Ovary (tissue), 10 donors: ENCODE measurements at regions of chr9 and their contacts with region 1.

Region 1: GRCh38 chr9:128504485-128505413 is at the start of gene GLE1:
- DNase-seq: peak; percentile 94 to 98 (median 97)
- H3K4me3 ChIP-seq: peak within 1 kb of the TSS; percentile 95
- H3K27ac ChIP-seq: peak within 1 kb of the TSS in 1 of 2 donors; percentile 65
- H3K4me1 ChIP-seq: peaks cover 7% of the 10 kb centered on the region
- H3K27me3 ChIP-seq: no peaks in the 10 kb centered on the region
- CTCF ChIP-seq: no peak
- EP300 ChIP-seq: no peak
- POLR2A ChIP-seq: peak; percentile 72
- total RNA-seq, gene GLE1: 12.4 to 20.2 (median 19.0) TPM

Region 2: DNA sequence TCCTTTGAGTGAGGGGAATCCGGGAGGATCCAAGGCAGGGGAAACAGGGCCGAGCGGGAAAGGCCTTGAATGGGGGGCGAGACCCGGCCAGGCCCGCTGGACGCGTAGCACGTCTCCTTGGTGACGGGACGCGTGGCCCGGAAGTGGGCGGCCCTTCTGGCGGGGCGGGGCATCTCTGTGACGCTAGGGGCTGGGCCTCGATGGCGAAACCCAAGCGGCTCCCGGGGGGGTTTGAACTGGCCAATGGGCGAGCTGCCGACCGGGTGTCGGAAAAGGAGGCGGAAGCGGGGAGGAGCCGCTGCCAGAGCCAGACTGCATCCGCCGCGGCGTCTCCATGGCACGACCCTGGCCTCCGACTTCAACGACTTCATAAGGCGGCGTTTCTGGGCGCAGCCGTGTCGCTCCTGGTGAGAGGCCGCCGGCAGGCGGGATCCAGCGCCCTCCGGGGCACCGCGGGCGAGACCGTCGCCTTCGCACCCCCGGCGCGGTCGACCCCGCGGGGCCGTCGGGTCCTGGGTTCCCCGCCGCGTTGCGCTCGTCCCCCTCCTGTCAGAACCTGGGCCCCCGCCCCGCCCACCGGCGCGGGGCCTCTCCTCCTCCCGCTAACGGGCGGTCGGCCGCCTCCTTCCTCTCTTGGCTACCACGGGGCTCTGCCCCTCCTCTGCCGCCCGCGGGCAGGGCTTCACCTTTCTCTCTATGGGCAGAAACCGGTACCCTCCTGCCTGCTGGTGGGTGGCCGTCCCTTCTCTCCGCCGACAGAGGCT is 48.7 kb before region 1 on chr9 and contains the start of gene ODF2:
- intact Hi-C with region 1: loop called in 1 of 4 experiments (anchors 5 kb)
- DNase-seq: peak; percentile 98 to 99 (median 99)
- H3K4me3 ChIP-seq: peak within 1 kb of the TSS; percentile 56
- H3K27ac ChIP-seq: peak within 1 kb of the TSS in 1 of 2 donors; percentile 73
- H3K4me1 ChIP-seq: peaks cover 2% of the 10 kb centered on the region
- H3K27me3 ChIP-seq: no peaks in the 10 kb centered on the region
- CTCF ChIP-seq: no peak
- EP300 ChIP-seq: no peak
- POLR2A ChIP-seq: peak; percentile 50
- total RNA-seq, gene ODF2: 9.7 to 26.5 (median 20.3) TPM

Region 3: DNA sequence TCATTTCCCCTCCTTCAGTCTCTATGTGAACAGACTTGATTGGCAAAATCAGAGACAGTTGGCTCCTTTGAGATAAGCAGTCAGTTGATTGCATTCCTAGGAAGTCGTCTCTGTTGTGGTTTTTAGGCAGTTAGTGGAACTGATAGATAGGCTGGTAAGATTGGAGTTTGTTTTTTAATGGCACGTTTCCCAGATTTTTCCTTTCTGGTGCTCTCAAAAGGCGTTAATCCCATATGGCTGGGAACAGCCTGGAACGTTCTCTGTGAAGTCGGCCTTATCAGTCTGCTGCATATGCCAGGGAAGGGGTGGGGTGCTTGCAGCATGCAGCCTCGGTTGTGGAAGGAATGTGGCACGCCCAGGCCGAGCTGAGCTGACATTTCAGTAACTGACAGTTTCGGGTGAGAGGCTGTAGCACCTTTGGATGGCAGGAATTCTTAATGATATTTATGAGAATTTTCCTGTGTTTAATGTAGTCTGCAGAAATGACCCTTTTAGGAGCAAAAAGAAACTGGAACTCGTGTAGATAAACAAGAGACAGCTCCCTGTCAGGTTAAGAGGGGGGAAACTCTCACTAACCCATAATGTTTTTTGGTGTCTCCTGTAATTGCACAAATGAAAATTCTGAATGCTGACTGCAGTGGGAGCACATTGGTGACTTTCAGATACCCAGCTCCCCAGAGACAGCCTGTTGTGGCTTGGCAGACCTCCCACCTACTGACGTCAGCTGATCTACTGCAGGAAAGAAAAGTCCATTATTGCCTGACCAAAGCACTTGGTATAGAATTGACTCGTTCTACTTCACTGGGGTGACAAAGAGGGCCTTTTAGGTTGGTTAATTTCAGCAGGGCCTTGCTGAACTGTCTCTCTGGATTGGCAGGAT is 53.9 kb after region 1 on chr9:
- intact Hi-C with region 1: no loop called
- DNase-seq: peak; percentile 73 to 83 (median 79)
- H3K4me3 ChIP-seq: no peak overlapping the region
- H3K27ac ChIP-seq: peak overlapping the region in 1 of 2 donors; percentile 29
- H3K4me1 ChIP-seq: peaks cover 10% of the 10 kb centered on the region
- H3K27me3 ChIP-seq: no peaks in the 10 kb centered on the region
- CTCF ChIP-seq: no peak
- EP300 ChIP-seq: no peak
- POLR2A ChIP-seq: no peak

Region 4: GRCh38 chr9:128635283-128636023 is 130.7 kb after region 1 on chr9:
- intact Hi-C with region 1: no loop called
- DNase-seq: peak; percentile 85 to 92 (median 88)
- H3K4me3 ChIP-seq: no peak overlapping the region
- H3K27ac ChIP-seq: peak overlapping the region; percentile 41 to 78
- H3K4me1 ChIP-seq: peaks cover 14% of the 10 kb centered on the region
- H3K27me3 ChIP-seq: no peaks in the 10 kb centered on the region
- CTCF ChIP-seq: peak; percentile 57 to 74 (median 61)
- EP300 ChIP-seq: no peak
- POLR2A ChIP-seq: no peak